GM10248 (cell line): ENCODE measurements at regions of chrX and their contacts with region 1.

Region 1: DNA sequence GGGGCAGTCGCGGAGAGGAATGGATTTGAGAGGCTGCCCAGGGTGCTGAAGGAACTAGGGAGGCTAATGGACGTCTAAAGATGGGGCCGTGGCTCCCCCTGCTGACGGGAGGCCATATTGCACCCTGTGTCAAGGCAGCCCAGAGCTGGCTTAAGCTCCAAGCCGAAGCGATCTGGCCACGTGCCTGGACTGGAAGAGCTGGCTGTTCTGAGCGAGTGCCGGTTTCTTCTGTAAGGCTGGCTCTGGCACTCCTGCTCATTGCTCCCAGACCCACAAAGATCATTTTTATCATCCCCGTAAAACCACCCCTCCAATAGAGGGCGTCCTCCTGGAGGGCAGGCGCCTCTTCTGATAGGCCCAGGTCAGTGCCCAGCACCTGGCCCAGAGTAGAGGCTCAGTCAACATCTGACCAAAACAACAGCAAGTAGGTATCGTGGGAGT is 5.6 kb downstream of the PNCK start:
- DNase-seq: peak; percentile 74
- CTCF ChIP-seq: peak; percentile 59

Region 2: GRCh38 chrX:152941328-152942106 is 726.5 kb before region 1 on chrX:
- CTCF ChIA-PET with region 1: interaction called, 22 read pairs
- POLR2A ChIA-PET with region 1: no interaction called
- DNase-seq: peak; percentile 93
- CTCF ChIP-seq: peak; percentile 68

Region 3: DNA sequence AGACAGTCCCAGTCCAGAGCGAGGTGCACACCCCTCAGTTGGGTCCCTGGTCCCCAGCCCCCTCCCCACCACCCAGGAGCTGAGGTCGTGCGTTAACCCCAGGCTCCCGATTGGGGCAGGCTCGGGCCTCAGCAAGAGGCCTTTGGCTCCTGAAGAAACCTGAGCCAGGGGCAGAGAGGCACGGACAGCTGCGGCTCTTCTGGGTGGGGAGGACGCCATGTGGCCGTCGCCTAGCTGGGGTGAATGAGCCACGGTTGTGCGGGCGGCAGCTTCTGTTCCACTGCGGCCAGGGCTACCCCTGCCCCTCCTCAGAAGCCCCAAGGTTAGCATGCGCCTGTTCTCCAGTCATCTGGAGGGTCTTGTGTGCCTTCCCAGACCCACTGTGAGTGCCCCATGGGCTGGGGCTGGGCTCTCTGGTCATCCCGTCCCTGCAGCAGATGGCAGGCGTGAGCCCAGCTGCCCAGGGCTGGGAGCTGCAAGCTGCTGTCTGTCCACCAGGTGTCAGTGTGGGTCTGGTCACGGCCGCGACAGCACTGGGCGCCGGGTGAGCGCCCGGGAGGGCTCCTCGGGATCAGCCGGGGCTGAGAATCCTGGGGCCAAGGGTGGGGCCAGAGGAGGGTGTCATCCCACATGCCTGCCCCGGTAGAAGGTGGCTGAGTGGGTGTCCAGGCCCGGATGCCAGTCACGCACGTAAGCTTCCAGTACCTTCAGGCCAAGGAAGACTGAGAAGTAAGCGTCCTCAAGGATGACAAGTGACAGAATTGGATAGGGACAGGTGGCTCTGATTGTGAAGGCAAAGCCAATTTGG is 128.6 kb before region 1 on chrX:
- CTCF ChIA-PET with region 1: interaction called, 118 read pairs
- POLR2A ChIA-PET with region 1: no interaction called
- DNase-seq: peak; percentile 77
- CTCF ChIP-seq: peak; percentile 79

Region 4: DNA sequence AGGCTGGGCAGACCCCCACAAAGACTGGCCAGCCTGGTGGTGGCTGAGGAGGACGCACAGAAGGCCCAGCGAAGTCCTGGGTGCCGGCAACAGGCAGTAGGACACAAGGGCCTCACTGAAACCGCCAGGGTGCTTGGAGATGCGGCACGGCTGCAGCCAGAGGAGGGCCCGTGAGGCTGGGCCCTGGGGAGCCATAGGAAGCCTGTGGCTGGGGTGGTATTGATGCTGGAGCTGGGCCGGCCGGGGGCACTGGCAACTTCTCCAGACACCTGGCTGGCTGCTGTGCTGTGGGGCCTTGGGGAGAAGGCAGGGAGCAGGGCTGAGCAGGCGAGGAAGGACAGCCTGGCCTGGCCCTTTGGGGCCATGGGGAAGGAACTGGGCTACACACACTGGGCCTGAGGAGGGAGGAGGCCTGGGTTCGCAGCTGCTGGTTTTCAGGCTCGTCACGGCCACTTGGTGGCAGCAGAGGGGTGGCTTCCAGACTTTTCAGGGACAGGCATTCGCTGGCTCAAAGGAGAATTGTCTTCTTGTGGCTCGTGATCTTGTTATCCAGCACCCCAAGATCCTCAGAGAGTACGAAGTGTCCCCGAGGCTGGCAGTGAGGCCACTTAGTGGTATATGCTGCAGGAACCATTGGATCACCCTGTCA is 113.3 kb before region 1 on chrX:
- CTCF ChIA-PET with region 1: interaction called, 28 read pairs
- POLR2A ChIA-PET with region 1: no interaction called
- DNase-seq: peak; percentile 71
- CTCF ChIP-seq: peak; percentile 70

Region 5: DNA sequence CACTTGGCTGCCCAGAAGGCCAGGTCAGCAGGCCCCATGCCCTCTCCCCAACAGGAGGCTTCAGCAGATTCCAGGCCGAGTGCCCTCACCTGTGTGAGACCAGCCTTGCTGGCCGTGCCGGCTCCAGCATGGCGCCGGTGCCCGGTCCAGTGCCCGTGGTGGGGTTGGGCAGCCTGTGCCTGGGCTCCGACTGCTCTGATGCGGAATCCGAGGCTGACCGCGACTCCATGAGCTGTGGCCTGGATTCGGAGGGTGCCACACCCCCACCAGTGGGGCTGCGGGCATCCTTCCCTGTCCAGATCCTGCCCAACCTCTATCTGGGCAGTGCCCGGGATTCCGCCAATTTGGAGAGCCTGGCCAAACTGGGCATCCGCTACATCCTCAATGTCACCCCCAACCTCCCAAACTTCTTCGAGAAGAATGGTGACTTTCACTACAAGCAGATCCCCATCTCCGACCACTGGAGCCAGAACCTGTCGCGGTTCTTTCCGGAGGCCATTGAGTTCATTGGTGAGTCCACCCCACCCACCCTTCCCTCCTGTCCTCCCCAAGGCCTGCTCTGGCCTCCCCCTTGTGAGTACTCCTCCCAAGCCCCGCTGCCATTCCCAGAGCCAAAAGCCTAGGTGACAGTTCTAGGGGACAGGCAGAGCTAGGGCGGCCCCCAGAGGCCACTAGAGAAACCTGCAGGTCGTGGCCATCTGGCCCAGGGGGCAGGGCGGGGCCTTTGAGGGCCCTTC is 18.6 kb before region 1 on chrX:
- CTCF ChIA-PET with region 1: interaction called, 13 read pairs
- POLR2A ChIA-PET with region 1: no interaction called
- DNase-seq: peak; percentile 80
- CTCF ChIP-seq: peak; percentile 65

Region 6: DNA sequence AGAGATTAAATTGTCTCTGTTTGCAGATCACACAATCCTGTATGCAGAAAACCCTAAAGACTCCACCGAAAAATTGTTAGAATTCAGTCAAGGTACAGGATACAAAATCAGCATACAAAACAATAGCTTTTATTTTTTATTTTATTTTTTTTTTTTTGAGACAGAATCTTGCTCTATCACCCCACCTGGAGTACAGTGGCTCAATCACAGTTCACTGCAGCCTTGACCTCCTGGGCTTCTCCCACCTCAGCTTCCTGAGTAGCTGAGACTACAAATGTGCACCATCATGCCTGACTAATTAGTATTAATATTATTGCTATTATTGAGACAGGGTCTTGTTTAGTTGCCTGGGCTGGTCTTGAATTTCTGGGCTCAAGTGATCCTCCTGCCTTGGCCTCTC is 87.2 kb after region 1 on chrX:
- CTCF ChIA-PET with region 1: no interaction called
- POLR2A ChIA-PET with region 1: no interaction called
- DNase-seq: no peak
- CTCF ChIP-seq: no peak